H1 (cell line): ENCODE measurements at regions of chr14 and their contacts with region 1.

Region 1: DNA sequence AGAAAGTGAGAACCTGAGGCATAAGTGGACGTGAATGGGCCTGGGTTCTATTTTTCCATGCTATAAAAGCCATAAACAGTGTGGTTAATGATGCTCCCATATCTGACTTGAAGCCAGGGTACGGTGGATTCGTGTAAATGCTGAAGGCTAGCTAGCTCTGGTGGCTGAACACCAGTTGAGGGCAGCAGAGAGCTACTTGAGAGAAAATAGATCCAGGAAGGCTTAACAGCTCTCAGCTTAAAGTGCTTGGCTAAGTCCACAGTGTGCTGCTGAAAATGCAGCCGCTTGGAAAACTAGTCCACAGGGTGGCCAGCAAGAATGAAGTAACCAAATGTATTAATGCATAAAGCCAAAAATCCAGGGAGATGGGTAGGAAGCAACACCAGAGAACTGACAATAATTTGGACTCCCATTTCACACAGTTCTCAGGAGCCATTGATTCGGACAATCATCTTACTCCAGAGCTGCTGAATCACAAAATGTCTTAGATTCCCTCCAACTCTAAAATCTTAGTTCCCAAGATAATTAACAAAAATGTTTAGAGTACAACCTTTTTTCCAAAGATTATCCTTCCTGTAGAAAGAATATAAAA is 15.0 kb upstream of the FOXG1 start:
- DNase-seq: peak in 1 of 2 experiments; percentile 72
- H3K4me3 ChIP-seq: no peak overlapping the region
- H3K27ac ChIP-seq: no peak overlapping the region
- H3K4me1 ChIP-seq: peaks cover 0 to 1% (median 0%) of the 10 kb centered on the region in 4 experiments; a peak in 3 of 7 replicates
- H3K27me3 ChIP-seq: peaks cover 18 to 23% (median 21%) of the 10 kb centered on the region in 4 experiments
- CTCF ChIP-seq: peak; percentile 51 to 94 (median 79)
- EP300 ChIP-seq: no peak
- POLR2A ChIP-seq: no peak
- RAD21 ChIP-seq: peak; percentile 71 to 82

Region 2: GRCh38 chr14:28565345-28565744 is 186.2 kb before region 1 on chr14:
- CTCF ChIA-PET with region 1: no interaction called
- POLR2A ChIA-PET with region 1: no interaction called
- DNase-seq: no peak
- H3K4me3 ChIP-seq: no peak overlapping the region
- H3K27ac ChIP-seq: no peak overlapping the region
- H3K4me1 ChIP-seq: no peaks in the 10 kb centered on the region
- H3K27me3 ChIP-seq: no peaks in the 10 kb centered on the region
- CTCF ChIP-seq: no peak
- EP300 ChIP-seq: no peak
- POLR2A ChIP-seq: no peak
- RAD21 ChIP-seq: no peak

Region 3: DNA sequence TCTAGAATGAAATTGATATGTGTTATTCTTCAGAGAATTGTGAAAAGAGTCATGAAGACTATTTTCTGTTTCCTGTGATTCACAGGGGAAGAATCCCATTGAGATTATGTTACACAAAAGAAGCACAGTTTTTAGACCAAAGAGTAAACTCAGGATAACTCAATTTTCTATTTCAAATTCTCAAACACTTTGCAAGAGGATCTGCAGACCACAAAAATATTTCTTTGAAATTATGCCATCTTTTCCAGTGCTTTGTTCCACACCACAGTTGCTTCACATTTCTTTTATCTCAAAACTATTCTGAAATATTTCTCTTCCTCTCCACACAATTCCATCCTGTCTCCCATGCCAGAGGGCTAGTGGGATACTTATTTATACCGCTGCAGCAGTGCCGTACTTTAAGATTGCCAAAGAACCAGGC is 173.8 kb before region 1 on chr14:
- CTCF ChIA-PET with region 1: no interaction called
- POLR2A ChIA-PET with region 1: no interaction called
- DNase-seq: no peak
- H3K4me3 ChIP-seq: no peak overlapping the region
- H3K27ac ChIP-seq: no peak overlapping the region
- H3K4me1 ChIP-seq: no peaks in the 10 kb centered on the region
- H3K27me3 ChIP-seq: no peaks in the 10 kb centered on the region
- CTCF ChIP-seq: no peak
- EP300 ChIP-seq: no peak
- POLR2A ChIP-seq: no peak
- RAD21 ChIP-seq: no peak

Region 4: GRCh38 chr14:28766469-28767238 is 15.1 kb after region 1 on chr14 and contains the start of gene FOXG1:
- CTCF ChIA-PET with region 1: interaction called, 63 read pairs
- POLR2A ChIA-PET with region 1: interaction called, 11 read pairs
- DNase-seq: peak in 1 of 2 experiments; percentile 72
- H3K4me3 ChIP-seq: peak within 1 kb of the TSS; percentile 46 to 79 (median 58)
- H3K27ac ChIP-seq: no peak within 1 kb of the TSS
- H3K4me1 ChIP-seq: peaks cover 2 to 17% (median 8%) of the 10 kb centered on the region in 4 experiments; a peak in 3 of 7 replicates
- H3K27me3 ChIP-seq: peaks cover 52 to 85% (median 75%) of the 10 kb centered on the region in 4 experiments
- CTCF ChIP-seq: no peak
- EP300 ChIP-seq: no peak
- POLR2A ChIP-seq: no peak
- RAD21 ChIP-seq: no peak
- total RNA-seq, gene FOXG1: 0.24 and 0.29 TPM in 2 replicates

Region 5: DNA sequence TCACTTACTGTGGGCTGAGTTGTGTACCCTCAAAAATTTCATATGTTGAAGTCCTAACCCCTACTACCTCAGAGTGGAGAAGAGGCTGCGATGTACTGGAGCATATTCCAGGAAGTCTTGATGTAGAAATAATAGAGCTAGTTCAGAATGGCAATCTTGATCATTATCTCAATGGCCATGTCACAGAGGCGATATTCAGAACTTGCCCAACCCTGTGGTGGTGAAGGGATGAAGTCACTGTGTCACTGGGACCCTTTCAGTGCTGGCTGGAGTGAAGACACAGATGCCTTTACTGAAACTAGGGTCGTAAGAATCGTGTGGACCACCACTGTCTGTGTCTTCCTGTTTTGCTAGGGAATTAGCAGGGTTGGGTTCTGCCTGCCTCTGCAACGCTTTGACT is 105.8 kb after region 1 on chr14:
- CTCF ChIA-PET with region 1: no interaction called
- POLR2A ChIA-PET with region 1: no interaction called
- DNase-seq: no peak
- H3K4me3 ChIP-seq: no peak overlapping the region
- H3K27ac ChIP-seq: no peak overlapping the region
- H3K4me1 ChIP-seq: no peaks in the 10 kb centered on the region
- H3K27me3 ChIP-seq: no peaks in the 10 kb centered on the region
- CTCF ChIP-seq: no peak
- EP300 ChIP-seq: no peak
- POLR2A ChIP-seq: no peak
- RAD21 ChIP-seq: no peak

Region 6: DNA sequence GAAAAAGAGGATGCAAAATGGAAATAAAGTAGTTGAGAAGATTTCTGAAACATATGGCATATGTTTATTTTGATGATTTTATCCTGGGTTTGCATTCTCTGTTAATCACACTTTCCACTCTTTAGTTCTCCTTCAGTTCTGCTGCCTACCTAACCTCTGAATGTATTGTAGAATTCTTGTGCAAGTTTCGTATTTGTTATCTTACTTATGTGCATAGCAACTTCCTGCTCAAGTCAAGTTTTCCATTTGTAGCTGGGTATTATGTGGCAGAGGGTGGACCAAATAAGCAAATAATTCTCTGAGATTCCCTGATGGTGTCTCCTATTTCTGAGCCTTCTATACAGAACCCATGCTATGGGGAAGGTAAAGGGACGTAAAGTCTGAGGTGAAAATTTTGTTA is 396.7 kb after region 1 on chr14:
- CTCF ChIA-PET with region 1: no interaction called
- POLR2A ChIA-PET with region 1: no interaction called
- DNase-seq: no peak
- H3K4me3 ChIP-seq: no peak overlapping the region
- H3K27ac ChIP-seq: no peak overlapping the region
- H3K4me1 ChIP-seq: no peaks in the 10 kb centered on the region
- H3K27me3 ChIP-seq: no peaks in the 10 kb centered on the region
- CTCF ChIP-seq: no peak
- EP300 ChIP-seq: no peak
- POLR2A ChIP-seq: no peak
- RAD21 ChIP-seq: no peak

Region 7: GRCh38 chr14:29521526-29522137 is 770.1 kb after region 1 on chr14:
- CTCF ChIA-PET with region 1: interaction called, 16 read pairs
- POLR2A ChIA-PET with region 1: no interaction called
- DNase-seq: peak; percentile 21 to 56
- H3K4me3 ChIP-seq: no peak overlapping the region
- H3K27ac ChIP-seq: no peak overlapping the region
- H3K4me1 ChIP-seq: no peaks in the 10 kb centered on the region
- H3K27me3 ChIP-seq: no peaks in the 10 kb centered on the region
- CTCF ChIP-seq: peak; percentile 52 to 82 (median 67)
- EP300 ChIP-seq: no peak
- POLR2A ChIP-seq: no peak
- RAD21 ChIP-seq: peak; percentile 86 to 89

Region 8: GRCh38 chr14:29529418-29529817 is 777.9 kb after region 1 on chr14:
- CTCF ChIA-PET with region 1: interaction called, 21 read pairs
- POLR2A ChIA-PET with region 1: no interaction called
- DNase-seq: no peak
- H3K4me3 ChIP-seq: no peak overlapping the region
- H3K27ac ChIP-seq: no peak overlapping the region
- H3K4me1 ChIP-seq: no peaks in the 10 kb centered on the region; a peak in 1 of 7 replicates
- H3K27me3 ChIP-seq: no peaks in the 10 kb centered on the region
- CTCF ChIP-seq: peak in 2 of 3 experiments; percentile 51 to 62; a peak in 3 of 4 replicates
- EP300 ChIP-seq: no peak
- POLR2A ChIP-seq: no peak
- RAD21 ChIP-seq: peak; percentile 55 to 62; a peak in 3 of 4 replicates